PC-3 (cell line): ENCODE measurements at regions of chr4 and their contacts with region 1.

Region 1: DNA sequence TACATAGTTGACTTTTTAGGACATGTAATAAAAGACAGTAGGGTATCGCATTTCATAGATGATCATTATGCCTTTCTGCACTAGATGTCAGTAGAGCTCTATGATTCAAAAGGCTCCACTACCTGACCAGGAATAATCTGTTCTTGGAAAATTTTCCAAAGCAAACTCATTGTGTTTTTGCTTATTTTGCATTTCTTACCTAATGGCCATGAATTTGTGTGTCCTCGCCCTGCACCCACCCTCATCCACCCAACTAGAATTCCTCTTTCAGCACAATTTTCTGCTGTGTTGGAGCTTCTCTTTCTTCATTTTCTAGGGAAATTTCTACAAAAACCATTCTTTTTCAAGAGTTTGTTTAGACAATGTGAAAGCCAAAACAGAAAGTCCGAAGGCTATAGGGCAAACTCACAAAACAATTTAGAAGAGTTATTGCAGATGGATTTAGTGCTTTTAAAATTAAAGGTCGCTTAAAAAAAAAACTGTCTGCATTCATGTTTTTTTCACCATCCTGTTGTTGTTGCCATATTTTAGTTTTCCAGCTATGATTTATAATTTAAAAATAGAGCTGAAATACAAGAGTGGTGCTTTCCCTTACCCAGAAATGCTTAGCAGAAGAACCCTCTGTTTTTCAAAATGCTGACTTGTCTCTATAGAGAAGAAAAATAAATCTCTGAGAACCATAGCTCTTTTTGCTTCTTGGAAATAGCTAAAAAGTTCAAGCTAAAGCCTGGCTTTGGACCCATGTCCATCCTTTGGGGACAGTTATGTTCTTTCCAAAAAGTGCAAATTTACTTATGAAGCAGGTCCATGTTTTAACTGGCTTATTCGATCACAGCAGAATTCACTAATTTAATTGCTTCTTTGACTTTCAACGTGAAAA is 183.7 kb downstream of the SPATA18 start:
- DNase-seq: peak; percentile 91
- ATAC-seq: peak; percentile 99
- H3K4me3 ChIP-seq: peak overlapping the region; percentile 50
- H3K27ac ChIP-seq: no peak overlapping the region
- H3K4me1 ChIP-seq: 0 out of 2 replicates have a peak, but pooled peaks cover 3% of the 10 kb centered on the region
- H3K27me3 ChIP-seq: peaks cover 13% of the 10 kb centered on the region; the same call in 1 of the 2 replicates
- CTCF ChIP-seq: peak; percentile 95

Region 2: DNA sequence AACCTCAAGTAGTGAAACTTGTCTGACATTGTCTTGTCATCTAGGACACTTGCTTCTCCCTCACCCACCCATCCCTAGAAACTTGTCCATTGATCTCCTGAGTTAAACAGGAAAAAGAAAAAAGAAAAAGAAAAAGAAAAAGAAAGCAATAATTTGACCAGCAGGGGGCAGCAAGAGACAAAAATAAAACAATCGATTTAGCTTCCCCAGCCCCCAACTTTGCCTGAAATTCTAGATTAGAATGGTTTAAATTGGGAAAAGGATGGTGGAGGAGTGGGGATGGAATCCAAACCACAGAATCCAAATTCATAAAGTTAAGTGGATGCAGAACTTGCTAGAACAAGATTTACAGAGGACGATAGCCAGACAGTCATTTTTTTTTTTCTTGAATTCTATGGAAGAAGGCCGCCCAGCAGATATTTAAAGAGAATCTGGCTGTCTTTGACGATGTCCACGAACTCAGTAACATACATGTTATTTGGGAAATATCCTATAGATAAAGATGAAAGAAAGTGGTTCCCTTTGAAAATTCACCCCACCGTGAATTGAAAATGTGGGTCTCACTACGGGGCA is 141.4 kb after region 1 on chr4:
- CTCF ChIA-PET with region 1: interaction called, 3 read pairs
- POLR2A ChIA-PET with region 1: no interaction called
- intact Hi-C with region 1: loop called (anchors 10 kb)
- DNase-seq: peak; percentile 77
- ATAC-seq: no peak; the same call in 1 of the 2 replicates
- H3K4me3 ChIP-seq: no peak overlapping the region
- H3K27ac ChIP-seq: no peak overlapping the region
- H3K4me1 ChIP-seq: peaks cover 11% of the 10 kb centered on the region
- H3K27me3 ChIP-seq: peaks cover 24% of the 10 kb centered on the region
- CTCF ChIP-seq: peak; percentile 88

Region 3: DNA sequence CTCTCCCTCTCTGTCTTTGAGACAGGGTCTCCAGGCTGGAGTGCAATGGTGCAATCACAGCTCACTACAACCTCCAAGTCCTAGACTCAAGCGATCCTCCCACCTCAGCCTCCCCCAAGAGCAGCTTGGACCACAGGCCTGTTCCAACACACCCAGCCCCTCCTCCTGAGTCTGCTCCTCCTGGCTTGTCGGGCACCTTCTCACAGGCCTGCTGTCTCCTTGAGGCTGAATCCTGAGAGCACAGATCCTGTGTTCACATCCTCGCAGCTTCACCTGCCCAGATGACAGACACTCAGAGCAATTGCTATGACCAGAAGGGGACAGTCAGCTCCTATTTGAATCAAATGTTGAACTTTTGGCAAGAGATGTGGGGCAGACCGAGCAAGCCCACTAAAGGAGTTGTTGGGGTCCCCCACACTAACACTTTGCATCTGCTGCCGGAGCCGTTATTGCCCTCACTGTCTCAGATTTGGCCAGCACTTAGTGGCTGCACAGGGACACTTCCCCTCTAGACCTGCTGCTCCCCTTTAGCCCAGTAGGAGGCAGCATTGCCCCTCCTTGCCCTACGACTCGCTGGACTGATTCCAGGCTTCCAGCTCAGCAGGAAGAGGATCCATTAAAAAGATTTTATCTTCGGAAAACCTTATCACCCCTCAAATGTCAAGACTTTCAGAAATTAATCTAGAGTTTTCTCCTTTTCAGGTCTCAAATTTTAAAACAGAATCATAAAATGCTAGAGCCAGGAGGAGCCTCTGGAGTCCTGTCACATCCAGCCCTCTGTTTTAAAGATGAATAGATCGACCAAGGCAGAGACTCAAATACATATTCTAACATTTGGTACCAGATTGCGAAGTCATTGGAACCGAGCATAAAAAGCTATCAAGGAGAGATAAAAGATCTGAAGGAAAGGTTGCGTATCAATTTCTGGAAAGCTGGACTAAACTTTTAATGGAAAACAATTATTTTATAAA is 310.6 kb after region 1 on chr4:
- CTCF ChIA-PET with region 1: interaction called, 3 read pairs
- POLR2A ChIA-PET with region 1: no interaction called
- intact Hi-C with region 1: loop called (anchors 10 kb)
- DNase-seq: peak; percentile 90
- ATAC-seq: peak; percentile 89
- H3K4me3 ChIP-seq: peak overlapping the region; percentile 38; the same call in 1 of the 2 replicates
- H3K27ac ChIP-seq: no peak overlapping the region
- H3K4me1 ChIP-seq: peaks cover 3% of the 10 kb centered on the region; the same call in 1 of the 2 replicates
- H3K27me3 ChIP-seq: peaks cover 11% of the 10 kb centered on the region; the same call in 1 of the 2 replicates
- CTCF ChIP-seq: peak; percentile 98

Region 4: GRCh38 chr4:52665592-52665991 is 430.8 kb after region 1 on chr4:
- CTCF ChIA-PET with region 1: no interaction called
- POLR2A ChIA-PET with region 1: no interaction called
- intact Hi-C with region 1: loop called (anchors 1 kb)
- DNase-seq: peak; percentile 47
- ATAC-seq: peak; percentile 86
- H3K4me3 ChIP-seq: no peak overlapping the region
- H3K27ac ChIP-seq: no peak overlapping the region
- H3K4me1 ChIP-seq: peaks cover under 1% of the 10 kb centered on the region; the same call in 1 of the 2 replicates
- H3K27me3 ChIP-seq: no peaks in the 10 kb centered on the region
- CTCF ChIP-seq: peak; percentile 72